ENCODE measurements at regions of chr6 and their contacts with region 1.

Region 1: GRCh38 chr6:40962241-40962640 is 76.8 kb downstream of the UNC5CL start:
- DNase-seq: no peak
- H3K4me3 ChIP-seq: no peak overlapping the region
- H3K27ac ChIP-seq: no peak overlapping the region
- H3K4me1 ChIP-seq: no peaks in the 10 kb centered on the region
- H3K27me3 ChIP-seq: no peaks in the 10 kb centered on the region
- CTCF ChIP-seq: no peak

Region 2: GRCh38 chr6:40914005-40914404 is 48.2 kb before region 1 on chr6:
- intact Hi-C with region 1: loop called (anchors 1 kb)
- DNase-seq: no peak
- H3K4me3 ChIP-seq: no peak overlapping the region
- H3K27ac ChIP-seq: no peak overlapping the region
- H3K4me1 ChIP-seq: no peaks in the 10 kb centered on the region
- H3K27me3 ChIP-seq: no peaks in the 10 kb centered on the region
- CTCF ChIP-seq: no peak